HCT116 (cell line): ENCODE measurements at regions of chr5 and their contacts with region 1.

Region 1: DNA sequence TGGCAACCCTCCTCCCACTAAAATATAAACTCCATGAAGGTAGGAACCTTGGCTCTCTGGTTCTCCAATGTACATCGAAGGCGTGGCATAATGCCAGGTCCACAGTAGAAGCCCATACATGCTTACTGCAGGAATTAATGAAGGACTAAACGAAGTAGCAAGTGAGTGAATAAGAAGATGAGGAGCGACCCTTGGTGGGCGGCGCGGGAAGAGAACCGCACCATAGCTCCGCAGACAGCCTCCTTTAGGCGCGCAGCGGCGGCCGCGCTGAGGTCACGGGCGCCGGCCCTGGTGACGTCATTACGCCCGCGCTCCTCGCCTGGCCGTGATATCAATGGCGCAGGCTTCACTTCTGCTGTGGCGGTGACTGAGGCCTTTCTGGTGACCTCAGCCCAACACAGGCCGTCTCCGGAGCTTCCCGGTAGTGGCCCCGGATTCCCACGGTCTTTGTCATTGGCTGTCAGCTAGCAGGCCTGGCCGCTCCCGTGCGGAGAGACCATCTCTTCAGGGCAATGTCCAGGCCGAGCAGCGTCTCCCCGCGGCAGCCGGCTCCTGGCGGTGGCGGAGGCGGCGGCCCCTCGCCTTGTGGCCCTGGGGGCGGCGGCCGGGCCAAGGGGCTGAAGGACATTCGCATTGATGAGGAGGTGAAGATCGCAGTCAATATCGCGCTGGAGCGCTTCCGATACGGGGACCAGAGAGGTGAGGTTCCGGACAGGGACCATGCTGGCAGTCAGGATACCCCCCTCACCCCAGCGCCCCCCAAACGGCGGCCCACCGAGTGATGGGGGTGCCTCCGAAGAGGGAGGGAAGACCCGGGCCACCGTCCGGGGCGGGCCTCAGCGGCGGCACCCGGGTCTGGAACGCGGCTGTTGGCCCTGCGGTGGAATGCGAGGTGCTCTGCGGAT is at the start of gene YTHDC2:
- DNase-seq: peak; percentile 73
- ATAC-seq: peak; percentile 98
- H3K4me3 ChIP-seq: peak within 1 kb of the TSS; percentile 68 to 84
- H3K27ac ChIP-seq: peak within 1 kb of the TSS; percentile 68
- H3K4me1 ChIP-seq: peaks cover 0 to 15% of the 10 kb centered on the region in 2 experiments; a peak in 2 of 4 replicates
- H3K27me3 ChIP-seq: no peaks in the 10 kb centered on the region
- CTCF ChIP-seq: peak in 2 of 3 experiments; percentile 11 to 22; a peak in 2 of 6 replicates
- POLR2A ChIP-seq: peak; percentile 87
- RAD21 ChIP-seq: peak; percentile 51
- total RNA-seq, gene YTHDC2: 22.2 TPM

Region 2: GRCh38 chr5:112995764-112996618 is 517.6 kb before region 1 on chr5:
- CTCF ChIA-PET with region 1: interaction called, 22 read pairs
- POLR2A ChIA-PET with region 1: interaction called, 4 read pairs
- RAD21 ChIA-PET with region 1: no interaction called
- intact Hi-C with region 1: loop called (anchors 1 kb)
- DNase-seq: peak; percentile 42
- ATAC-seq: peak; percentile 87
- H3K4me3 ChIP-seq: no peak overlapping the region
- H3K27ac ChIP-seq: no peak overlapping the region
- H3K4me1 ChIP-seq: no peaks in the 10 kb centered on the region
- H3K27me3 ChIP-seq: no peaks in the 10 kb centered on the region
- CTCF ChIP-seq: peak; percentile 72 to 97 (median 81)
- POLR2A ChIP-seq: no peak
- RAD21 ChIP-seq: peak; percentile 92

Region 3: GRCh38 chr5:113204525-113205161 is 309.0 kb before region 1 on chr5:
- CTCF ChIA-PET with region 1: no interaction called
- POLR2A ChIA-PET with region 1: no interaction called
- RAD21 ChIA-PET with region 1: no interaction called
- intact Hi-C with region 1: loop called (anchors 5 kb)
- DNase-seq: no peak
- ATAC-seq: no peak
- H3K4me3 ChIP-seq: no peak overlapping the region
- H3K27ac ChIP-seq: no peak overlapping the region
- H3K4me1 ChIP-seq: peaks cover 33 to 65% of the 10 kb centered on the region in 2 experiments
- H3K27me3 ChIP-seq: no peaks in the 10 kb centered on the region
- CTCF ChIP-seq: no peak
- POLR2A ChIP-seq: no peak
- RAD21 ChIP-seq: no peak

Region 4: DNA sequence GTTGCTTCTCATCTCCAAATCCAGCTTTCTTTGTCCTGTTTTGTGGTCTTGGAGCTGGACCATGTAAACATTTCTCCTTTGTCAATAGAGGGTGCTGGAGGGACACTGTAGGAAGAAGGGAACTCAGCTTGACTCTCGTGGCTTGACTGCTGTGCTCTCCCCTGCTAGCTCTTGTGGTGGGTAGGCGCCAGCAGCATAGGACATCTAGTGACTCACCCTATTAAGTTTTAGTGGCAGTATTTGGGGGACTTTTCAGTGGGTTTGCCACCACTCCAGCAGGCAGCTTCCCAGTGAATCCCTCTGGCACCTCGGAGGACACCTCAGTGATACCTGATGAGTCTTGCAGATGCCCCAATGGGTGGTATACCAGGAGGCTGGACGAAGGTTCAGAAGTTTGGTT is 176.7 kb before region 1 on chr5:
- CTCF ChIA-PET with region 1: interaction called, 31 read pairs
- POLR2A ChIA-PET with region 1: interaction called, 4 read pairs
- RAD21 ChIA-PET with region 1: interaction called, 11 to 15 read pairs
- intact Hi-C with region 1: loop called (anchors 1 kb)
- DNase-seq: peak; percentile 70
- ATAC-seq: peak; percentile 95
- H3K4me3 ChIP-seq: no peak overlapping the region
- H3K27ac ChIP-seq: no peak overlapping the region
- H3K4me1 ChIP-seq: no peaks in the 10 kb centered on the region
- H3K27me3 ChIP-seq: no peaks in the 10 kb centered on the region
- CTCF ChIP-seq: peak; percentile 60 to 69 (median 68)
- POLR2A ChIP-seq: no peak
- RAD21 ChIP-seq: peak; percentile 88

Region 5: GRCh38 chr5:113425914-113426313 is 87.7 kb before region 1 on chr5:
- CTCF ChIA-PET with region 1: no interaction called
- POLR2A ChIA-PET with region 1: no interaction called
- RAD21 ChIA-PET with region 1: no interaction called
- intact Hi-C with region 1: no loop called
- DNase-seq: no peak
- ATAC-seq: no peak
- H3K4me3 ChIP-seq: no peak overlapping the region
- H3K27ac ChIP-seq: no peak overlapping the region
- H3K4me1 ChIP-seq: no peaks in the 10 kb centered on the region
- H3K27me3 ChIP-seq: no peaks in the 10 kb centered on the region
- CTCF ChIP-seq: no peak
- POLR2A ChIP-seq: no peak
- RAD21 ChIP-seq: no peak

Region 6: GRCh38 chr5:113606298-113607134 is 92.9 kb after region 1 on chr5:
- CTCF ChIA-PET with region 1: no interaction called
- POLR2A ChIA-PET with region 1: no interaction called
- RAD21 ChIA-PET with region 1: no interaction called
- intact Hi-C with region 1: loop called (anchors 5 kb)
- DNase-seq: peak; percentile 38
- ATAC-seq: peak; percentile 97
- H3K4me3 ChIP-seq: no peak overlapping the region
- H3K27ac ChIP-seq: no peak overlapping the region
- H3K4me1 ChIP-seq: peaks cover 0 to 8% of the 10 kb centered on the region in 2 experiments; a peak in 1 of 4 replicates
- H3K27me3 ChIP-seq: no peaks in the 10 kb centered on the region
- CTCF ChIP-seq: peak; percentile 70 to 93 (median 78); a peak in 5 of 6 replicates
- POLR2A ChIP-seq: no peak
- RAD21 ChIP-seq: peak; percentile 96